CD14-positive monocyte (primary cell): ENCODE measurements at regions of chr10 and their contacts with region 1.

Region 1: DNA sequence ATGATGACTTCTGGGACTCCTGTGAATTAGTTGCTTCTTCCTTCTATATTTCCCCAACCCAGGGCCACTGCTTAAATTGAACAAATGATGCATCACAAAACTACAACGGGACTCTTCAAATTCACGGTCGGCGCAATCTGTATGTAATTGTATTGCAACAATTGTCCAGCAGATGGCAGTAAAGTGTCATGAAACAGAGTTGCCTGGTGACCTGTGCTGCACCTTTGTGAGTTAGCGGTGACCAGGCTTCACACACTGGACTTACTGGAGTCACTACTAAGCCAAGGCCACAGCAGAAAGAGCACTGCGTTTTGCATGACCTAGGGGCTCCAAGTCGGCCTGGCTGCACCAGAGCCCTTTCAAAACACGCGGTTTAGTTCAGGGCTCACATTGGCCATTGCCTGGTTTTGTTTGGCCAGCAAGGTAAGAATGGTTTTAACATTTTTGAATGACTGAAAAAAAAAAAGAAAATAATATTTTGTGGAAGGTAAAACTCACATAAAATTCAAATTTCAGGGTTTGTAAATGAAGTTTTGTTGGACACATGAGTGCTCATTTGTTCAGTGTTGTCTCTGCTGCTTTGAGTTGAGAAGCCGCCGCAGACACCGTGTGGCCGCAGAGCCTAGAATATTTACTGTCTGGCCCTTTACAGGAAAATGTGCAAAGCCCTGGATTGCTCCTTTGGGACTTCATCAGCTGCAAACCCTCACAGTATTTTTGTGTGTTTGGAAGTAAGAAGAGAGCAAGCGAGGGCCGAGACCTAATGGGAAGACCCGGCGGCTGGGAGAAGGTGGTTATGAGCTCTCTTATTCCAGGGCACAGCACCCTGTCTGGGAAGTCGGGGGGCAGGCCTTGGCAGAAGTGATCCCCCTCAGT is 23.2 kb upstream of the ZNF32 start:
- DNase-seq: peak; percentile 40 to 60 (median 56)
- H3K4me3 ChIP-seq: no peak overlapping the region
- H3K4me3 Mint-ChIP-seq: no peak overlapping the region
- H3K27ac ChIP-seq: no peak overlapping the region
- H3K27ac Mint-ChIP-seq: no peak overlapping the region
- H3K4me1 ChIP-seq: peaks cover 3 to 8% of the 10 kb centered on the region in 2 donors
- H3K4me1 Mint-ChIP-seq: peaks cover 3% of the 10 kb centered on the region
- H3K27me3 ChIP-seq: peaks cover 0 to 15% of the 10 kb centered on the region in 2 donors
- H3K27me3 Mint-ChIP-seq: peaks cover 15 to 35% (median 16%) of the 10 kb centered on the region in 3 donors
- CTCF ChIP-seq: peak; percentile 83

Region 2: DNA sequence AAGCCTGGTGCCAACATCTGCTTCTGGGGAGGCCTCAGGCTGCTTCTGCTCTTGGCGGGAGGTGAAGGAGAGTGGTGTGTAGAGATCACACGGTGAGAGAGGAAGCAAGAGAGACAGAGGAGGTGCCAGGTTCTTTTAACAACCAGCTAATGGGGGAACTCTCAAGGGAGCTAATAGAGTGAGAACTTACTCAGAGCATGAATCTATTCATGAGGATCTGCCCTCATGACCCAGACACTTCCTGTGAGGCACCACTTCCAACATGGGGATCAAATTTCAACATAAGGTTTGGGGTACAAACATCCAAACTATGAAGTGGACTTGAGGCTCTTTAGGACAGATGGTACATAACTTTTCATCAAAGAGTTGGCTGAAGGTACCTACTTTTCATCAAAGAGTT is 18.1 kb before region 1 on chr10:
- intact Hi-C with region 1: no loop called
- DNase-seq: no peak
- H3K4me3 ChIP-seq: no peak overlapping the region
- H3K4me3 Mint-ChIP-seq: no peak overlapping the region
- H3K27ac ChIP-seq: no peak overlapping the region
- H3K27ac Mint-ChIP-seq: no peak overlapping the region
- H3K4me1 ChIP-seq: peaks cover 5 to 7% of the 10 kb centered on the region in 2 donors
- H3K4me1 Mint-ChIP-seq: peaks cover 6% of the 10 kb centered on the region
- H3K27me3 ChIP-seq: no peaks in the 10 kb centered on the region
- H3K27me3 Mint-ChIP-seq: peaks cover 8 to 18% (median 12%) of the 10 kb centered on the region in 3 donors
- CTCF ChIP-seq: no peak

Region 3: GRCh38 chr10:44310762-44311562 is 639.1 kb after region 1 on chr10:
- intact Hi-C with region 1: loop called (anchors 5 kb)
- DNase-seq: peak; percentile 27 to 63 (median 32)
- H3K4me3 ChIP-seq: no peak overlapping the region
- H3K4me3 Mint-ChIP-seq: peak overlapping the region in 1 of 2 donors; percentile 59
- H3K27ac ChIP-seq: no peak overlapping the region
- H3K27ac Mint-ChIP-seq: no peak overlapping the region
- H3K4me1 ChIP-seq: peaks cover 0 to 6% of the 10 kb centered on the region in 2 donors
- H3K4me1 Mint-ChIP-seq: peaks cover 5% of the 10 kb centered on the region
- H3K27me3 ChIP-seq: no peaks in the 10 kb centered on the region
- H3K27me3 Mint-ChIP-seq: peaks cover 5 to 16% (median 12%) of the 10 kb centered on the region in 3 donors
- CTCF ChIP-seq: peak; percentile 80

Region 4: DNA sequence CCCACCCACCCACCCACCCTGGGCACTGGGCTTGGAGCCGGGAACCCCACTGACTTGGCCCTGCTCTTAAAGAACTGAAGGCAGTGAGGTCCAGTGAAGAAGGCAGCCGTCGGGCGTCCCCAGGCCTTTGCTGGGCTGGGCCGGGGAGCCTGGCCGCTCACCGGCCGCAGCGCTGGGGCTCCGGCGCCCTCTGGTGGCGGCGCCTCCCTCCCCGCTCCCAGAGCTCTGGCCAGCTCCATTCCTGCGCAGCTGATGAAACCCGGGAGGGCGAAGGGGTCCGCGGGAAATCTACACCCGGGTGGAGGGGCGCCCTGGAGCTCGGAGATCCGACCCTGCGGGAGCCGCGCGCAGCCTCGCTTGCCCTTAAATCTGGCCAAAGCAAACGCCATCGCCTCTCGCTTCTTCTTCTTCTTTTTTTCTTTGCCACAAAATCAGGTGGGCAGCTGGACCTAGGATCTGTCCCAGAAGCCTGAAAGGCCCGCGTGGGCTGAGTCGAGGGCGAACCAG is 714.7 kb after region 1 on chr10:
- intact Hi-C with region 1: loop called (anchors 5 kb)
- DNase-seq: peak in 2 of 3 donors; percentile 14 to 27
- H3K4me3 ChIP-seq: no peak overlapping the region
- H3K4me3 Mint-ChIP-seq: peak overlapping the region in 1 of 2 donors; percentile 36
- H3K27ac ChIP-seq: no peak overlapping the region
- H3K27ac Mint-ChIP-seq: no peak overlapping the region
- H3K4me1 ChIP-seq: no peaks in the 10 kb centered on the region
- H3K4me1 Mint-ChIP-seq: peaks cover 4% of the 10 kb centered on the region
- H3K27me3 ChIP-seq: peaks cover 9 to 52% of the 10 kb centered on the region in 2 donors
- H3K27me3 Mint-ChIP-seq: peaks cover 49 to 61% (median 58%) of the 10 kb centered on the region in 3 donors
- CTCF ChIP-seq: peak; percentile 78